Posterior vena cava (tissue), 2 donors: ENCODE measurements at regions of chr5 and their contacts with region 1.

Region 1: GRCh38 chr5:149304195-149305078 is 32.8 kb downstream of the AFAP1L1 start:
- DNase-seq: no peak

Region 2: DNA sequence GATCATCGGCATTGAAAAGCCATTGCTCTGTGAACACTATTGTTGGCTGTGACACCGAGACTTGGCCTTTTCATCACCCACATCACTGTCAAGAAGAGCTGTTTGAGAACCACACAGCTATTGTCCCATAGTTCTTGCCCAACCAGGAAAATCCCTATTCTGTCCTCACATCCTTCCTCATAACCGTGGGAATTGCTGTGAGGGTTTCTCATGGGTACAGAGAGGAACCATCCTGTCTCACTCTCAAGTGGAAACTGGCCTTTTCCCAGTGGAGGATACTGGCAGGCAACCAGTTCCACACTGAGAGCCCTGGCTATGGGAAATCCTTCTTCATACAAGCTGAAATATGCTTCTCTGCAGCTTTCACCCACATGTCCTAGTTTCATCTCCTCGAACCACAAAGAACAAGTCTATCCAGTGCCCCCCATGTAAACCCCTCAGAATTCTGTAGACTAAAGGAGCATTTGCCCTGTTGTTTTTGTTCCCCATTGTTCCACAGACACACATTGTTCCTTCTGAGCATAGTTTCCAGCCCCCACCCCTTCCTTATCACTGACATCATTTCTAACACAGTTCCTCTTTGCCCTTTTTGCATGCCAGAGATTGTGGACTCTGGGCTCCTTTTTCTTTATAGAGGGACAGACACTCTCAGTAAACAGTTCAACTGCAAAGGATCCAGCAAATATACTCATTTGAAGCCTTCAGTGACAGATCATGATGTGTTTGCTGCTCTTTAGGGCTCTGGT is 1340.3 kb before region 1 on chr5:
- intact Hi-C with region 1: no loop called
- DNase-seq: no peak

Region 3: GRCh38 chr5:149345147-149345875 is 40.9 kb after region 1 on chr5 and contains the start of gene GRPEL2:
- intact Hi-C with region 1: loop called in 1 of 2 experiments (anchors 2 kb)
- DNase-seq: peak; percentile 98
- total RNA-seq, gene GRPEL2: 13.1 to 16.0 TPM